Calu3 (cell line): ENCODE measurements at regions of chr2 and their contacts with region 1.

Region 1: DNA sequence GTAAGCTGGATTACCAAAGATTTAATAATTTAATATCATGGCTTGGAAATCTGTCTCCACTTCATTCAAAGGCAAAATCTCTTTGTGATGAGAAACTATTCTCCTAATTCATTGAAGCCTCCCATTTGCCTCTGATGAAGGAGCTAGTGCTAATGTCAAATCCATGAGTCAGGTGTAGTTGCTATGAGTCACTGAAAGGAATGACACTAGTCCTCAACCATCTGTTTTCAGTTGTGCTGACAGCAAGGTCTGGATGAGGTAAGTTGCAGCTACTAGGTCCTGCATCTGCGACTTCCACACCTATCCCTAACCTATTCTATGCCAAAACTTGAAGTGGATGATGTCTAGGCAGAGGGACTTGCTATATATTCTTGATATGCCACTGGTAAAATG is 324.0 kb upstream of the UBE2E3 start:
- DNase-seq: peak; percentile 42
- H3K4me3 Mint-ChIP-seq: no peak overlapping the region
- H3K27ac Mint-ChIP-seq: peak overlapping the region; percentile 56
- H3K4me1 Mint-ChIP-seq: peaks cover 49% of the 10 kb centered on the region
- H3K27me3 Mint-ChIP-seq: no peaks in the 10 kb centered on the region
- CTCF ChIP-seq: no peak

Region 2: GRCh38 chr2:180319586-180320405 is 336.7 kb before region 1 on chr2:
- CTCF ChIA-PET with region 1: no interaction called
- intact Hi-C with region 1: no loop called
- DNase-seq: no peak
- H3K4me3 Mint-ChIP-seq: no peak overlapping the region
- H3K27ac Mint-ChIP-seq: no peak overlapping the region
- H3K4me1 Mint-ChIP-seq: peaks cover 8% of the 10 kb centered on the region
- H3K27me3 Mint-ChIP-seq: no peaks in the 10 kb centered on the region
- CTCF ChIP-seq: no peak

Region 3: DNA sequence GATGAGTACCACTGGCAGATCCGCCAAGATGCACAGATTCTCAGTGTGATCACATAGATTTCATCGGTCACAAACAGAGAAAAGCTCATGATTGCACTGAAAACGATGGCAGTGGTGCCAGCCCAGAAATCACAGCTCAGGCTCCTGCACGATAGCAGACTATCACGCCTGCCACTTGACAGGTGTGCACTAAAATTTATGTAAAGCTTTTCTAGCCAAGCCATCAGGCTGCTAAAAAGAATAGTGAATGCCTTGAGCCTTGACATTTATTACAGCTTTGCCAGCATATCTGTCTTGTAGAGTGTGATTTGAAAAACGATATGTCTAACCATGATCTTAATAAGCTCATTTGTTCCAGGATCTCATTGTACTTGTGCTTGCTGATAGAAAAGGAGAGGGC is 239.8 kb before region 1 on chr2:
- CTCF ChIA-PET with region 1: no interaction called
- intact Hi-C with region 1: no loop called
- DNase-seq: no peak
- H3K4me3 Mint-ChIP-seq: no peak overlapping the region
- H3K27ac Mint-ChIP-seq: no peak overlapping the region
- H3K4me1 Mint-ChIP-seq: peaks cover 21% of the 10 kb centered on the region
- H3K27me3 Mint-ChIP-seq: no peaks in the 10 kb centered on the region
- CTCF ChIP-seq: no peak

Region 4: DNA sequence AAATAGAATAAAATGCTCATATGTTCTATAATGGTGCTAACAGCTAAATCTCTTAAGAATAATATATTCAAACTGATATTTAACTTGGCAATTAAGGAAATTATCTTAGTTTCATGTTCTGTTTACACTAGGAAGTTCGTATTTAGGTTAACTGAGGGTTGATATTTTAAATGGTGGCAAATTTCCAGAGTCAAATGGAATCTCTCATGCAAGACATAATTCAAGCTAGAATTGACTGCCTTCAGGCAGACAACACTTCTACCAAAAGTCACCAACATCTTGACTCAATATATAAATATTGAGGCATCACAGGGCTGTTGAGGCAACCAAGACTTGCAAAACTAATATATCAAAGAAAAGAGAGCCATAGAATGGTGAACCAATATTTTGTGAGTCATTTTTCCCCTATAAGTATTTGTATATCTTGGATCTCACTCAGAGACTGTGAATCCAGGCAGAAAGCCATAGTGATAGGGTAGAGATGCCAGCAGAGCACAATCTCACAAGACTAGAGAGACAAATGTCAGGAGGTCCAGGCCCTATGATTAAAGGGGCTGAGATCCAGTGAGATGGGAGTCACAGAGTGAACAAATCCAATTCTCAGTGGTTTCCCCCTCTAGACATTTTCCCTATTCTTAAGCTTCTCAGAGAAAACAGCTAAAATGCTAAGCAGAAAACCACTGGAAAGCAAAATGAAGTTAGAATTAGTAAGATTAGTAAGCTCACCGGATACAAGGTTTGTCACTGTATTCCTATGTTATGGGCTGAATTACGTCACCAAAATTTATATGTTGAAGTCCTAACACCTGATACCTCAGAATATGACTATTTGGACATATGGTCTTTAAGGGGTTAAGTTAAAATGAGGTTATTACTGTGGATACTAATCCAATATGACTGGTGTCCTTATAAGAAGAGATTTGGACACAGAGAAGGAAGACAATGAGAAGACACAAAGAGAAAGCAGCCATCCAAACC is 34.2 kb before region 1 on chr2:
- CTCF ChIA-PET with region 1: no interaction called
- intact Hi-C with region 1: no loop called
- DNase-seq: no peak
- H3K4me3 Mint-ChIP-seq: no peak overlapping the region
- H3K27ac Mint-ChIP-seq: no peak overlapping the region
- H3K4me1 Mint-ChIP-seq: peaks cover 23% of the 10 kb centered on the region
- H3K27me3 Mint-ChIP-seq: no peaks in the 10 kb centered on the region
- CTCF ChIP-seq: no peak

Region 5: GRCh38 chr2:180644709-180645108 is 11.7 kb before region 1 on chr2:
- CTCF ChIA-PET with region 1: interaction called, 16 read pairs
- intact Hi-C with region 1: no loop called
- DNase-seq: peak; percentile 58
- H3K4me3 Mint-ChIP-seq: no peak overlapping the region
- H3K27ac Mint-ChIP-seq: no peak overlapping the region
- H3K4me1 Mint-ChIP-seq: peaks cover 12% of the 10 kb centered on the region
- H3K27me3 Mint-ChIP-seq: no peaks in the 10 kb centered on the region
- CTCF ChIP-seq: no peak